Thyroid gland (tissue), 4 donors: ENCODE measurements at regions of chr7 and their contacts with region 1.

Region 1: DNA sequence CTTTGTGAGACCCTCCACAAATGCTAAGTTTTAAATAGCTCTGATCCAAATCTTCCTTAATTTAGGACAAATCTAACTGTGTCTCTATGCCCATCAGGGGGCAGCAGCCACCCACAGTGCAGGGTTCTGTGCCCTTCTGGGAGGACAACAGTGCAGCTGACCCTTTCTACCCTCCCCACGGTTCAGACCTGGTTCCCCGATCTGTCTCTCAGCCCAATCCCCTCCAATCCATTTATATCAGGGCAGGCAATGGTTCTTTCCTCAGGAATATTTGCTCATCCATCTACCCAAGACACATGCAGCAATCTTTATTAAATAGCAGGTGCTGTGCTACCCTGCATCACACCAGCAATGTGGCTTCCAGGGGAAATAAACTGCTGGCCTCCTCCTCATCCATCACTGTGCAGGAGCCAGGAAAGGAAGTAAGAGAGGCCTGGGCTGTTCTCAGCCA is 4.0 kb upstream of the RBM28 start:
- DNase-seq: peak; percentile 55
- H3K4me3 ChIP-seq: no peak overlapping the region
- H3K27ac ChIP-seq: no peak overlapping the region
- H3K4me1 ChIP-seq: peaks cover 5 to 16% of the 10 kb centered on the region in 2 donors
- H3K27me3 ChIP-seq: peaks cover 8% of the 10 kb centered on the region
- CTCF ChIP-seq: peak; percentile 23 to 62 (median 45)
- POLR2A ChIP-seq: no peak

Region 2: DNA sequence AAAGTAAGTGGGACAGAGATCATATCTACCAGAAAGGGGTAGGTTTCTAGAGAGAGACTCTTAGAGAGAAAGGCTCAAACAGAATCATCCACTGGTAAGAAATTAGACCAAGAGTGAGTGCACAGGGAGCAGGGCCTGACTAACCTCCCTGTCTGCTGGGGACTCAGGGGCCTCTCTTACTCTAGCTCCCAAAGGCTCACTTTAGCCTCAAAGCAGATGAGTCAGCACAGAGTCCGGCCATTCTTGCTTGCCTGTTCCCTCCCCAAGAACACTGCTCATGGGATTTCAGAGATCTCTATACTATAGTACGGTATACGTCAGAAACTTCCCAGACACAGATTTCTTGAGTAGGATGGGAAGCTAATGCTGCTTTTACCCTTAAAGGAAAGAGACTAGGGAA is 36.7 kb before region 1 on chr7:
- intact Hi-C with region 1: no loop called
- DNase-seq: no peak
- H3K4me3 ChIP-seq: no peak overlapping the region
- H3K27ac ChIP-seq: no peak overlapping the region
- H3K4me1 ChIP-seq: no peaks in the 10 kb centered on the region
- H3K27me3 ChIP-seq: no peaks in the 10 kb centered on the region
- CTCF ChIP-seq: no peak
- POLR2A ChIP-seq: no peak

Region 3: GRCh38 chr7:128387216-128388144 is 39.8 kb after region 1 on chr7:
- intact Hi-C with region 1: loop called (anchors 2 kb)
- DNase-seq: peak; percentile 68 to 69
- H3K4me3 ChIP-seq: no peak overlapping the region
- H3K27ac ChIP-seq: no peak overlapping the region
- H3K4me1 ChIP-seq: no peaks in the 10 kb centered on the region
- H3K27me3 ChIP-seq: no peaks in the 10 kb centered on the region
- CTCF ChIP-seq: peak; percentile 64 to 88 (median 74)
- POLR2A ChIP-seq: no peak